Gastrocnemius medialis (tissue), 4 donors: ENCODE measurements at regions of chr11 and their contacts with region 1.

Region 1: DNA sequence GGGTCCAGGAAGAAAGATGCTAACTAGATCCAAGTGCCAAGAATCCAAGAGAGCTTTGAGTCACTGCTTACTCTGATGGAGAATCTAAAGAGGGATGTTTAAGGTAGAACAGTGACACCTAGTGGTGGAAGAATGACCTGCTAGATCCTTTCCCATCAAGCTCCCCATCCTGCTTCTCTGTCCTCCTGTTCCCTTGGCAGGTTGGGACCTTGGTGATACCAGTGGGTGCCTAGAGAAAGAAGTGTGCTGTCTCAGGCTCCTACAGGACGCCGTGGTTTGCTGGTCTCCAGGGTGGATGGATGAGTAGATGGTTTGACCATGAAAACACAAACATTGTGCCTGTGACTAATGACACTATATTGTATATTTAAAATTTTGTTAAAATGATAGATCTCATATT is 383.7 kb downstream of the TMEM135 start:
- DNase-seq: no peak
- ATAC-seq: peak; percentile 72 to 84
- H3K4me3 ChIP-seq: no peak overlapping the region
- H3K27ac ChIP-seq: no peak overlapping the region
- H3K4me1 ChIP-seq: peaks cover 9 to 11% of the 10 kb centered on the region in 2 donors
- H3K27me3 ChIP-seq: no peaks in the 10 kb centered on the region
- CTCF ChIP-seq: peak; percentile 60 to 85 (median 74)
- POLR2A ChIP-seq: no peak

Region 2: GRCh38 chr11:86938900-86939880 is 482.2 kb before region 1 on chr11:
- in situ Hi-C with region 1: loop called in 2 of 4 experiments (anchors 10 kb)
- intact Hi-C with region 1: no loop called
- DNase-seq: no peak
- ATAC-seq: peak in 1 of 2 donors; percentile 33
- H3K4me3 ChIP-seq: peak overlapping the region in 2 of 4 donors; percentile 40 to 54
- H3K27ac ChIP-seq: peak overlapping the region; percentile 74 to 85 (median 82)
- H3K4me1 ChIP-seq: peaks cover 47 to 50% of the 10 kb centered on the region in 2 donors
- H3K27me3 ChIP-seq: no peaks in the 10 kb centered on the region
- CTCF ChIP-seq: peak; percentile 63 to 77 (median 68)
- POLR2A ChIP-seq: no peak

Region 3: GRCh38 chr11:87352759-87353707 is 68.4 kb before region 1 on chr11:
- in situ Hi-C with region 1: loop called (anchors 5 kb)
- intact Hi-C with region 1: loop called (anchors 1 kb)
- DNase-seq: peak; percentile 58 to 64
- ATAC-seq: peak; percentile 86 to 91
- H3K4me3 ChIP-seq: peak overlapping the region in 1 of 4 donors; percentile 31
- H3K27ac ChIP-seq: no peak overlapping the region
- H3K4me1 ChIP-seq: peaks cover 0 to 21% of the 10 kb centered on the region in 2 donors
- H3K27me3 ChIP-seq: no peaks in the 10 kb centered on the region
- CTCF ChIP-seq: peak; percentile 95 to 100 (median 98)
- POLR2A ChIP-seq: no peak